Left cardiac atrium (tissue), 4 donors: ENCODE measurements at regions of chr4 and their contacts with region 1.

Region 1: GRCh38 chr4:81466841-81467671 is 4.7 kb downstream of the RASGEF1B start:
- DNase-seq: peak; percentile 49
- ATAC-seq: no peak

Region 2: GRCh38 chr4:81574991-81575390 is 107.9 kb after region 1 on chr4:
- intact Hi-C with region 1: no loop called
- DNase-seq: no peak
- ATAC-seq: no peak

Region 3: GRCh38 chr4:81688085-81688484 is 221.0 kb after region 1 on chr4:
- intact Hi-C with region 1: loop called in 1 of 2 experiments (anchors 10 kb)
- DNase-seq: no peak
- ATAC-seq: peak; percentile 49 to 67

Region 4: GRCh38 chr4:81844717-81845116 is 377.7 kb after region 1 on chr4:
- intact Hi-C with region 1: loop called (anchors 2 to 5 kb)
- DNase-seq: peak; percentile 69
- ATAC-seq: peak; percentile 84 to 95

Region 5: DNA sequence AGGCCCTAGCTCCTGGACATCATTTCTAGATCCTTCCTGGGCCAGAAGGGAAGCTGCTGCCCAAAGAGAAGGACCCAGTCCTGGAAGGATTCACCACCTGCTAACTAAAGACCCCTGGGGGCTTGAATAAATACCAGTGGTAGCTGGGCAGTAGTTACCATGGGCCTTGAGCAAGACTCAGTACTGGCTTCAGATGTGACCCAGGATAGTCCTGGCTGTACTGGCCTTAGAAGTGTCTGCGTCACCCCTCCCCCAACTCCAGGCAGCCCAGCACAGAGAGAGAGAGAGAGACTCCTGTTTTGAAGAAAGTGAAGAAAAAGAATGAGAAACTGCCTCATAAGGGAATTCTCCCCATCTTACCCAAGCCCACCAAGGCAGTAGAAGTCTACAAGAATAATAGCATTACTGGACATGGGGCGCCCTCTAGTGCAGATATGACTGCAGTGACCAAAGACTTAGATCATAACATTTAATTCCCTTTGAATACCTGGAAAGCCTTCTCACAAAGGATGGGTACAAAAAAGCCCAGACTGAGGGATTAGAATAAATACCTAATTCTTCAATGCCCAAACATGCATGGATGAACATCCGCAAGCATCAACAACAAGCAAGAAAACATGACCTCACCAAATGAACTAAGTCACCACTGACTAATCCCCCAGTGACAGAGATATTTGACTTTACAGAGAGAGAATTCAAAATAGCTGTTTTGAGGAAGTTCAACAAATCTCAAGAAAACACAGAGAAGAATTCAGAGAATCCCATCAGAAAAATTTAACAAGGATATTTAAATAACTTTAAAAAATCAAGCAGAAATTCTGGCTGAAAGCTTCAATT is 735.0 kb after region 1 on chr4:
- intact Hi-C with region 1: loop called in 1 of 2 experiments (anchors 5 kb)
- DNase-seq: peak; percentile 36
- ATAC-seq: no peak

Region 6: GRCh38 chr4:82268050-82268825 is 801.2 kb after region 1 on chr4:
- intact Hi-C with region 1: loop called in 1 of 2 experiments (anchors 10 kb)
- DNase-seq: peak; percentile 46
- ATAC-seq: peak; percentile 97 to 98